Common myeloid progenitor, CD34-positive (primary cell): ENCODE measurements at regions of chr4 and their contacts with region 1.

Region 1: GRCh38 chr4:71217688-71218087 is 121.1 kb upstream of the SLC4A4 start:
- DNase-seq: no peak
- H3K4me3 ChIP-seq: no peak overlapping the region
- H3K27ac ChIP-seq: no peak overlapping the region
- H3K4me1 ChIP-seq: no peaks in the 10 kb centered on the region
- H3K27me3 ChIP-seq: no peaks in the 10 kb centered on the region

Region 2: GRCh38 chr4:71147261-71147660 is 70.4 kb before region 1 on chr4:
- CTCF ChIA-PET with region 1: no interaction called
- POLR2A ChIA-PET with region 1: no interaction called
- DNase-seq: no peak
- H3K4me3 ChIP-seq: no peak overlapping the region
- H3K27ac ChIP-seq: no peak overlapping the region
- H3K4me1 ChIP-seq: no peaks in the 10 kb centered on the region
- H3K27me3 ChIP-seq: no peaks in the 10 kb centered on the region

Region 3: GRCh38 chr4:71229477-71230270 is 12.0 kb after region 1 on chr4:
- CTCF ChIA-PET with region 1: interaction called, 15 read pairs
- POLR2A ChIA-PET with region 1: no interaction called
- DNase-seq: peak; percentile 17 to 44 (median 42)
- H3K4me3 ChIP-seq: no peak overlapping the region
- H3K27ac ChIP-seq: no peak overlapping the region
- H3K4me1 ChIP-seq: no peaks in the 10 kb centered on the region
- H3K27me3 ChIP-seq: peaks cover 0 to 19% (median 6%) of the 10 kb centered on the region in 5 experiments